H1 (cell line): ENCODE measurements at regions of chr12 and their contacts with region 1.

Region 1: GRCh38 chr12:9378430-9378835 is 170.2 kb upstream of the PZP start:
- DNase-seq: no peak
- H3K4me3 ChIP-seq: no peak overlapping the region
- H3K27ac ChIP-seq: no peak overlapping the region
- H3K4me1 ChIP-seq: no peaks in the 10 kb centered on the region; a peak in 3 of 7 replicates
- H3K27me3 ChIP-seq: no peaks in the 10 kb centered on the region
- CTCF ChIP-seq: peak; percentile 55 to 66 (median 65)
- EP300 ChIP-seq: no peak
- POLR2A ChIP-seq: no peak
- RAD21 ChIP-seq: peak; percentile 63 to 77

Region 2: DNA sequence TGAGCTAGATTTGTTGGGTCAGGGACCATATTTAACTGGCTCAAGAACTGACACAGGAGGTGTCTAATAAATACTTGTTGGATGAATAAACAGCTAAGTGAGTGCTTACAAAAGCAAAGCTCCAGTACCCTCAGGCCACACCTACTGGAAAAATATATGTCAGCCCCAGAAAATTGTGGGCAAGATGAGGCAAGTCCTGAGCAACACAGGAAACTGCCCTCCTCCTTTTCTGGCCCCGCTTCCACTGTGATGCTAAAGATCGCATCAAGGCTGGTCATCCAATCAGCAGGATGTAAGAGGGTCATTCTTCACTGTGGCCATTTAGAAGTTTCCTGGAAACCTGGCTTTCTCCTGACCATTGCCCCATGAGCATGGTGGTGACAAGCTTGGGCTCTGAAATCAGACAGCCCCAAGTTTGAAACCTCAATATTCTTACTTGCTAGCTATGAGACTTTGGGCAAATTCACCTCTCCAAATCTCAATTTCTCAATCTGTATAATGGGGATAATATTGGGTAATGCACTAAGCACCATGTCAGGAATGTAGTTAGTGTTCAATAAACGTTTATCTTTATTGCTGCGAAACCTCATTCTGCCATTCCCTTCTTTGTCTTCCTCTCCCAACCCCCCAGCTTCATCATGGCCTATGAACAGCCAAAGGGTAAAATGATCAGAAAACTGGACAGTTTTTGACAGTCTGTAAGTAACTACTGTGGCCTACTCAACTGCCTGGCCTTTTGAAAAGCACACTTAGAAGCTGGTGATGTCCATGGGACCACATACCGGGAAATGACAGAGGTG is 30.9 kb before region 1 on chr12:
- CTCF ChIA-PET with region 1: interaction called, 18 read pairs
- POLR2A ChIA-PET with region 1: interaction called, 3 read pairs
- DNase-seq: no peak
- H3K4me3 ChIP-seq: no peak overlapping the region
- H3K27ac ChIP-seq: no peak overlapping the region
- H3K4me1 ChIP-seq: no peaks in the 10 kb centered on the region
- H3K27me3 ChIP-seq: no peaks in the 10 kb centered on the region
- CTCF ChIP-seq: no peak
- EP300 ChIP-seq: no peak
- POLR2A ChIP-seq: no peak
- RAD21 ChIP-seq: no peak

Region 3: DNA sequence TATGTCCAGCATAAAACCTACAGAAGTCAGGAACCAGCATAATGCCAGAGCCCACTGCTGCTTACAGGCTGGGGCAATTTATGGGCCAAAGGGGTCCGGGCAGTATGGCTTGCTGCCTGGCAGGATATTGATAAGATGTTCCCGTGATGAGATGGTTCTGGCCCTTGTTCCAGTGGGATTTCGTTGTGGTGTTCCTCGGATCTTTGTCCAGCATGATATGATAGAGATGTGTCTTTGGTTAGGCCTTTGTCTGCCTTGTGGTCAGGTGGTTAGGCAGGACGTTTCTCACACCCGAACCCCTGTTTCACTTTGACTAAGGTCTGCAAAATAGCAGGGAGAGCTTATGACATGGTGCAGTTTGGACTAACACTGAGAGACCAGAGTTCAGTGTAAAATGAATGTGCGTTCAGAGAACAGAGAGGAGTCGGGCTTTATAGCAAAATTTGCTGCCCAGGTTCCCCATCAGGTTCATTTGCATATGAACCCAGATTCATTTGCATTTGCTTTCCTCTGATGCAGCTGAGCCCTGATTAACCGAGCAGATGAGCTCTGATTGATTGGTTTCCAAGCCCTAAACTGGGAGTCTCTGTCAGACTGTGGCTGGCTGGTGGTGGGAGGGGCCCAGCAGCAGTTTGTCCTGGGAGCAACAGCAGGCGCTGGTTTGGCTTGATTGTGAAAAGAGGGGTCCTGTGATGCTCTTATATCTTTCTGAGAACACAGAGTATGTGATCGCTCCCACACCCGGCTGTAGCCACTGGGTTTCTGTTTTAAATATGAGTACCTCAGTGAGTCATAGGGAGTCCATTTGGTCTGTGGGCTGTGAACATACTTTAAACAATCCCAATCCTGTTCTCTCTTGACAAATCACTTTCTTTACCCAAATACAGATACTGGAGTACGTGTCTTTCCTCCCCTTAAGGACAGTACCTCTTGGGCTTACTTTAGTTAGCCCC is 13.9 kb before region 1 on chr12:
- CTCF ChIA-PET with region 1: interaction called, 66 read pairs
- POLR2A ChIA-PET with region 1: interaction called, 31 read pairs
- DNase-seq: peak; percentile 44 to 65
- H3K4me3 ChIP-seq: peak overlapping the region in 3 of 4 experiments; percentile 8 to 24 (median 24); a peak in 4 of 8 replicates
- H3K27ac ChIP-seq: peak overlapping the region; percentile 80
- H3K4me1 ChIP-seq: peaks cover 4 to 21% (median 12%) of the 10 kb centered on the region in 4 experiments; a peak in 6 of 7 replicates
- H3K27me3 ChIP-seq: no peaks in the 10 kb centered on the region
- CTCF ChIP-seq: no peak
- EP300 ChIP-seq: no peak
- POLR2A ChIP-seq: peak; percentile 90 to 98
- RAD21 ChIP-seq: no peak

Region 4: GRCh38 chr12:9464408-9464807 is 86.0 kb after region 1 on chr12:
- CTCF ChIA-PET with region 1: interaction called, 13 read pairs
- POLR2A ChIA-PET with region 1: no interaction called
- DNase-seq: no peak
- H3K4me3 ChIP-seq: no peak overlapping the region
- H3K27ac ChIP-seq: no peak overlapping the region
- H3K4me1 ChIP-seq: no peaks in the 10 kb centered on the region
- H3K27me3 ChIP-seq: no peaks in the 10 kb centered on the region
- CTCF ChIP-seq: no peak
- EP300 ChIP-seq: no peak
- POLR2A ChIP-seq: no peak
- RAD21 ChIP-seq: no peak